Heart right ventricle (tissue), 16 donors: ENCODE measurements at regions of chr3 and their contacts with region 1.

Region 1: DNA sequence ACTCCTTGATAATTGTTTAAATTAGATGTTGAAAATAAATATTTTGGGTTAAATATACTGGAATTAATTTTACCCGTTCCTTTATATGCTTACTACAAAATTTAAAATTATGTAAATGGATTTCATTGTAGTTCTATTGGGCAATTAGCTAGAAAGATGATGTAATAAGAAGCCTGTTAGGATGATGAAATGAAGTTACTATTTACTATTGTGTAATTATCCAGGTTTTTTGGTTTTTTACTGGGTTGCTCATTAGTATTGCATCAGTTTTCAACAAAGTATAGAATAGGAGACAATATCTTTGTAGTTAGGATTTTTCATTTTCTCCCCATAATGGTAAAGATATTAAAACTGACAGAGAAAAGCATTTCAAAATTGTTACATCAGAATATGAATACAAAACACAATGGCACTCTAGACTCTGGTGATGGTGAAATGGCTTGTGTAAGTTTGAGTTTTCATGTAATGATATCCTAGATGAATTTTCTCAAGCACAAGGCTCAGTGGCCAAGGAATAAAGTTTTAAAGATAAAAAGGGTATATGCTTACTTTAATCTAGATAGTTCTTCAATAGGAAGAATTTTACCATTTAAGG is 222.0 kb downstream of the P3H2 start:
- DNase-seq: no peak
- ATAC-seq: no peak
- H3K4me3 ChIP-seq: no peak overlapping the region
- H3K27ac ChIP-seq: no peak overlapping the region
- H3K4me1 ChIP-seq: peaks cover 0 to 1% (median 0%) of the 10 kb centered on the region in 9 donors
- H3K27me3 ChIP-seq: no peaks in the 10 kb centered on the region
- CTCF ChIP-seq: no peak

Region 2: DNA sequence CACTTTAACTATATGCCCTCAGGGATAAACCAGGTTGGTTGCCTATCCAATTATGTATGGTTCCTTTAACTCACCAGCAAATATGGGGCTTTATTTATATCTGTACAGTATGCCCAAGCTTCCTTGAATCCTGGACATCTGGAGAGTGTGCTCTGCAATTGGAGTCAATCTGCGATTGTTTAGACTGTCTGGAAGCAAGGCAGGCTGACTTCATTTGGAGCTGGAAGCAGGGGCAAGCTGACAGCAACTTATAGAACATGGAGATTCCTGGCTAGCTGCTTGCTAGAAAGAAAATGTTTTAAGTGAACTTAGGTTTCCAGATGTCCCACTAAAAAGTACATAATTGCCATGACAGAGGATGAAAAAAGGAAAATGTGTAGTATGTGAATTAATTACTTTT is 790.6 kb before region 1 on chr3:
- intact Hi-C with region 1: loop called in 1 of 10 experiments (anchors 5 kb)
- DNase-seq: no peak
- ATAC-seq: no peak
- H3K4me3 ChIP-seq: no peak overlapping the region
- H3K27ac ChIP-seq: no peak overlapping the region
- H3K4me1 ChIP-seq: no peaks in the 10 kb centered on the region
- H3K27me3 ChIP-seq: no peaks in the 10 kb centered on the region
- CTCF ChIP-seq: no peak

Region 3: GRCh38 chr3:189995129-189995528 is 96.5 kb after region 1 on chr3:
- intact Hi-C with region 1: no loop called
- DNase-seq: no peak
- ATAC-seq: no peak
- H3K4me3 ChIP-seq: no peak overlapping the region
- H3K27ac ChIP-seq: no peak overlapping the region
- H3K4me1 ChIP-seq: no peaks in the 10 kb centered on the region
- H3K27me3 ChIP-seq: no peaks in the 10 kb centered on the region
- CTCF ChIP-seq: no peak